ENCODE measurements at regions of chr18 and their contacts with region 1.

Region 1: DNA sequence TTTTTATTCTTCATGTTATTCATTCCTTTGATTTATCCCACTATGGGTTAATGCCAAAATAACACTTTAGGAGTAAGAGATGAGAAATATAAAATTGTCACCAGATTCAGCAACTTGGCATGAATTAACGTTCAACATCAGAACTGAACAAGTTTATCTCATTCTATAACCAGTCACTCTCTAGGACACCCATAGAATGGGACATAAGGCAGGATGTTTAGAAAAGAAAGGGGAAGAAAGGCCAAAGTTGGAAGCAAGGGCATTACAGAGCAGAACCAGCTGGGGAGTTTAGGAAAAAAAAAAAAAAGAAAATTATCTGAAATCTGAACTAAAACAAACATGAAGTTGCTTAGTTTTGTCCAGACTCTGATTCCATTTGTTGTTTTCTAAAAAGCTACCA is 211.0 kb downstream of the PMAIP1 start:
- DNase-seq: no peak
- ATAC-seq: no peak
- H3K4me3 ChIP-seq: no peak overlapping the region
- H3K27ac ChIP-seq: no peak overlapping the region
- H3K4me1 ChIP-seq: no peaks in the 10 kb centered on the region
- H3K27me3 ChIP-seq: no peaks in the 10 kb centered on the region
- CTCF ChIP-seq: no peak
- POLR2A ChIP-seq: no peak

Region 2: DNA sequence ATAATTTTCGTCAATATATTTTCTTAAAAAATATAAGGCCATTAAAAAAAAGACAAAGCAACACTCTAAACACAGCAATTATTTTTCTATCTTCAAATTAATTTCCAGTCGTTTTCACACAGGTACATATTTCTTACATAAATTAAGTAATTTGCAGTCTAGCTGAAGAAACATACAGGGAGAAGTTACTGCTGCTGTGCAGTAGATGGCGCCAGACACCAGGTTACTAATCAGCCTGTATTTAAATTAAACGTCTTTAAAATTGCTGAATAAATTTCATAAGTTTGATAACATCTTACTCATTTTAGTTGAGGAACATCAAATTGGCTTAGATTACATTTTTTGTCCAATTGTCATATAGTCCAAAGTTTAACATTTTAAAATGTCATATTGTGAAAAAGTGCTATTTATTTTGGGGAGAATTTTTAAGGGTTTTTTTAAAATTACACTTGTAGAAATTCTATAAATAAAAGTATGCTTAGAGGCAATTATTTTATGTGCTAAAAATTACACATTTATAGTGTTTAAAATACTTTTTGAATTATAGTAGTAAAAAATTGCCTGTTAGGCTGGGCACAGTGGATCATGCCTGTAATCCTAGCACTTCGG is 122.6 kb before region 1 on chr18:
- intact Hi-C with region 1: no loop called
- DNase-seq: peak in 3 of 5 donors; percentile 19 to 28 (median 27)
- ATAC-seq: no peak
- H3K4me3 ChIP-seq: no peak overlapping the region
- H3K27ac ChIP-seq: no peak overlapping the region
- H3K4me1 ChIP-seq: no peaks in the 10 kb centered on the region
- H3K27me3 ChIP-seq: peaks cover 0 to 25% (median 4%) of the 10 kb centered on the region in 9 donors
- CTCF ChIP-seq: peak; percentile 74 to 98 (median 86)
- POLR2A ChIP-seq: no peak

Region 3: GRCh38 chr18:60053747-60054304 is 57.0 kb before region 1 on chr18:
- intact Hi-C with region 1: no loop called
- DNase-seq: no peak
- ATAC-seq: no peak
- H3K4me3 ChIP-seq: no peak overlapping the region
- H3K27ac ChIP-seq: no peak overlapping the region
- H3K4me1 ChIP-seq: no peaks in the 10 kb centered on the region
- H3K27me3 ChIP-seq: no peaks in the 10 kb centered on the region
- CTCF ChIP-seq: no peak
- POLR2A ChIP-seq: no peak

Region 4: GRCh38 chr18:60157810-60158209 is 47.0 kb after region 1 on chr18:
- intact Hi-C with region 1: no loop called
- DNase-seq: no peak
- ATAC-seq: no peak
- H3K4me3 ChIP-seq: no peak overlapping the region
- H3K27ac ChIP-seq: no peak overlapping the region
- H3K4me1 ChIP-seq: no peaks in the 10 kb centered on the region
- H3K27me3 ChIP-seq: no peaks in the 10 kb centered on the region
- CTCF ChIP-seq: no peak
- POLR2A ChIP-seq: no peak

Region 5: DNA sequence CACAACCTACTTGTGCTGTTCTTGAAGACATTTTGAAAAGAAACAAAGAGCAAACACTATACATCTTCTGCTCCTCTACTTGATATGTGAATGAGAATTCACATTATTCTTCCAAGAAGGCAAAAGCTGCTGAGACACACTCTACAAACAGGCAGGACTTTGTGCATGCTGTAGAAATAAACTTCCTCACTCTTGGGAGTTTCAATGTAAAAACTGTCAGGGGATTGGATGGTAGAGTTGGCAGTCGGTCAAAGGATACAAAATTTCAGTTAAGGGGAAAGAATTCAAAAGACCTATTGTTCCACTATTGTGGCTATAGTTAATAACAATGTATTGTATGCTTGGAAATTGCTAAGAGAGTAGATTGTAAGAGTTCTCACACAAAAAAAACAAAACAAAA is 65.4 kb after region 1 on chr18:
- intact Hi-C with region 1: loop called in 1 of 10 experiments (anchors 10 kb)
- DNase-seq: no peak
- ATAC-seq: no peak
- H3K4me3 ChIP-seq: no peak overlapping the region
- H3K27ac ChIP-seq: no peak overlapping the region
- H3K4me1 ChIP-seq: no peaks in the 10 kb centered on the region
- H3K27me3 ChIP-seq: no peaks in the 10 kb centered on the region
- CTCF ChIP-seq: no peak
- POLR2A ChIP-seq: no peak

Region 6: GRCh38 chr18:60189856-60190255 is 79.0 kb after region 1 on chr18:
- intact Hi-C with region 1: no loop called
- DNase-seq: no peak
- ATAC-seq: no peak
- H3K4me3 ChIP-seq: no peak overlapping the region
- H3K27ac ChIP-seq: no peak overlapping the region
- H3K4me1 ChIP-seq: peaks cover 0 to 6% (median 0%) of the 10 kb centered on the region in 12 donors
- H3K27me3 ChIP-seq: no peaks in the 10 kb centered on the region
- CTCF ChIP-seq: no peak
- POLR2A ChIP-seq: no peak